Transverse colon (tissue), 4 donors: ENCODE measurements at regions of chr5 and their contacts with region 1.

Region 1: DNA sequence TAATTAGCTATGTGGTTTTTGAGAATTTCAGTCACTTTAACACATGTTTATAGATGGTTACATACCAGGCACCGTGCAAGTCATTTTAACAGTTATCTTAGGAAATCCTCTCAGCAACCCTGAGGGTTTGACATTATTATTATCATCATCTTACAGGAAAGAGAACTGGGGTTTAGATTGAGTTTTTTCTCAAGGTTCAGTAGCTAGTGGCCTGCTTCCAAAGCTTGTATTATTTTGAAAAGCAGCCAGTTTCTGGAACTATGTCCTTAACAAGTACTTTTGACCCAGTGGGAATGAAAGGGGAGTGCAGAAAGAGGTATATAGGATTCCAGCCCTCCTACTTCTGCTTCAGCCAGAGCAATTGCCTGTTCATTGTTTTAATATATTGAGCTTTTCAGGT is 157.5 kb downstream of the COMMD10 start:
- DNase-seq: no peak
- H3K4me3 ChIP-seq: no peak overlapping the region
- H3K27ac ChIP-seq: no peak overlapping the region
- H3K4me1 ChIP-seq: peaks cover 0 to 3% (median 0%) of the 10 kb centered on the region in 4 donors
- H3K27me3 ChIP-seq: no peaks in the 10 kb centered on the region
- CTCF ChIP-seq: no peak
- EP300 ChIP-seq: no peak
- POLR2A ChIP-seq: no peak

Region 2: GRCh38 chr5:115343855-115344254 is 898.5 kb before region 1 on chr5:
- in situ Hi-C with region 1: no loop called
- intact Hi-C with region 1: loop called (anchors 5 kb)
- DNase-seq: no peak
- H3K4me3 ChIP-seq: no peak overlapping the region
- H3K27ac ChIP-seq: no peak overlapping the region
- H3K4me1 ChIP-seq: peaks cover 0 to 11% (median 6%) of the 10 kb centered on the region in 4 donors
- H3K27me3 ChIP-seq: no peaks in the 10 kb centered on the region
- CTCF ChIP-seq: no peak
- EP300 ChIP-seq: no peak
- POLR2A ChIP-seq: no peak